Body of pancreas (tissue), 4 donors: ENCODE measurements at regions of chr20 and their contacts with region 1.

Region 1: DNA sequence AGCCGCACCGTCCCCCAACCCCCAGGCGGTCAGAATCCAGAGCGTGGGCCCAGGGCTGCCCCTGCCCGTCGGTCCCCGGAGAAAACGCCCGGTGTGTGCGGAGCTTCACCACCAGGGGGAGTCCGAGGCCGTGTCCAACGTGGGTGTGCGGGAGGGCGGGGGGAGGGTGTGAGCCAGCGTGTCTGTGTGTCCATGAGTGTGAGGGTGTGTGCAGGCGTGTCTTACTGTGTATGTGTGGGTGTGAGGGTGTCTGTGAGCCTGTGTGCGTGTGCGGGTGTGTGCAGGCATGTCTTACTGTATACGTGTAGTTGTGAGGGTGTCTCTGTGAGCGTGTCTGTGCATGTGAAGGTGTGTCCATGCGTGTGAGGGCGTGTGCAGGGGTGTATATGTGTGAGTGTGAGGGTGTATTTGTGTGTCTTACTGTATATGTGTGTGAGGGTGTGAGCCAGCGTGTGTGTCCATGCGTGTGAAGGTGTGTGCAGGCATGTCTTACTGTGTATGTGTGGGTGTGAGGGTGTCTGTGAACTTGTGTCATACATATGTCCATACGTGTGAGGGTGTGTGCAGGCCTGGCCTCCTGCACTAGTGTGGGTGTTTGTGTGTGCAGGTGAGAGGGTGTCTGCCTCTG is 24.6 kb upstream of the GATA5 start:
- DNase-seq: peak; percentile 71 to 80 (median 76)
- ATAC-seq: peak; percentile 80
- H3K4me3 ChIP-seq: no peak overlapping the region
- H3K27ac ChIP-seq: no peak overlapping the region
- H3K4me1 ChIP-seq: peaks cover 20% of the 10 kb centered on the region
- H3K27me3 ChIP-seq: peaks cover 0 to 8% of the 10 kb centered on the region in 2 donors
- CTCF ChIP-seq: peak; percentile 74 to 91 (median 86)
- POLR2A ChIP-seq: no peak

Region 2: DNA sequence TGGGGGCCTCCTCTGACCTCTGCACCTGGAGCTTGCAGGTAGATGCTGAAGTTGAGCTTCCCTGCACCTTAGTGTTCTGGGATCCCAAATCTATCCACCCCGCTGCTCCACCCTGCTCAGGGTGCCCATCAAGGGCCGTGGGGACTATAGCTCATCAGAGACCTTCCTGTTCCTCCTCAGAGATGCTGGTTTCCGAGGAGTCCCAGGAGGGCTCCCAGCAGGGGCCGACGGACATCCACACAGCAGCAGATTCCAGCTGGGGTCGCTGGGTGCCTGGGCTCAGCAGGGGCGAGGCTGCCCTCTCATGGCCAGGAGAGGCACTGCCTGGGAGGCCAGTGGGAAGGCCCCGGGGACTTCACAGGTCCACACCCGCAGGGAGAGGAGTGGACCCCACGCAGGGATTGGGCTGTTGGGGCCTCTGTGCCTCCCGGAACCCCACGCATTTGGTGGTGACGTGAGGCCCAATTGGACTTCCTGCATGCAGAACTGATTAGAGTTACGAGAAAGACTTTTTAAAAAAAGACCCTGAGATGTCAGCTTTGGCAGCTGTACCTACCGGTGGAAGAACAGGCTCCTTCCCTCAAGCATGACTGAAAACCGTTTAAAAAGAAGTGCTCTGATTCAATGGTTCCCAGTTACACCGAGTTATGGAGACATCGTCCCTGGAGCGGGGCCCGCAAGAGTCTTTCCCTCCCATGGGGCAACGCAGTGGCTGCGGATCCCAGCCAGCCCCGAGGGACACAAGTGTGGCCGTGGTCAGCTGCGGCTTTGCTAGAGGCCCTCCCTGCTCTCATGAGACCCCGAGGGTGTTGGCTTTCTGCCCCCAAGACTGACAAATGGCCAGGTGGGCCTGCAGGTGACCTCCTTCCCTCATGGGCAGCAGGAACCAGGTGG is 116.6 kb after region 1 on chr20:
- intact Hi-C with region 1: loop called (anchors 5 kb)
- DNase-seq: peak; percentile 75 to 84 (median 77)
- ATAC-seq: peak; percentile 88
- H3K4me3 ChIP-seq: no peak overlapping the region
- H3K27ac ChIP-seq: peak overlapping the region in 3 of 4 donors; percentile 25 to 60 (median 36)
- H3K4me1 ChIP-seq: peaks cover 4% of the 10 kb centered on the region
- H3K27me3 ChIP-seq: no peaks in the 10 kb centered on the region
- CTCF ChIP-seq: peak; percentile 84 to 97 (median 91)
- POLR2A ChIP-seq: no peak

Region 3: DNA sequence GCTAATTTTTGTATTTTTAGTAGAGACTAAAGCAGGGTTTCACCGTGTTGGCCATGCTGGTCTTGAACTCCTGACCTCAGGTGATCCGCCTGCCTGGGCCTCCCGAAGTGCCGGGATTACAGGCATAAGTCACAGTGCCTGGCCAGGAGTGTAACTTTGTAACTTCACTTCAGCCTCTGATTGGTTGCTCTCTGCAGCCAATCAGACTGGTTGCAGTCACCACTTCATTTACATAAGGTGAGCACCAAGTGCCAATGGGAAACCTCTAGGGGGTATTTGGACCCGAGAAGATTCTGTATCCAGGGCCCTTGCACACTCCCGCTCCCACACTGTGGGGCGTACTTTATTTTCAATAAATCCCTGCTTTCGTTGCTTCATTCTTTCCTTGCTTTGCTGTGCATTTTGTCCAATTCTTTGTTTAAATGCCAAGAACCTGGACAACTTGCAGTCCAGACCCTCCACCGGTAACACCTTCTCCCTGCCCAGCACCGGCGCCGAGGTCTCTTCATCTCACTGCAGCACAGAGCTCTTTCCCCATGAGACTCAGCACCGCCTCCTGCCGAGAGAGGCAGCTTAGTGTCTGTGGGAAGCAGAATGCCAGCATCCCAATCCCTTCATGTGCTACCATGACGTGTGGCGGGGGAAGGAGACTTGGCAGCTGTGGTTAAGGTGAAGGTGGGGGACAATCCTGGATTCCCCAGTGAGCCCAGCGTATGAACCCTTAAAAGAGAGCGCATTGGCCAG is 282.0 kb after region 1 on chr20:
- intact Hi-C with region 1: loop called (anchors 10 kb)
- DNase-seq: no peak
- ATAC-seq: no peak
- H3K4me3 ChIP-seq: no peak overlapping the region
- H3K27ac ChIP-seq: no peak overlapping the region
- H3K4me1 ChIP-seq: no peaks in the 10 kb centered on the region
- H3K27me3 ChIP-seq: no peaks in the 10 kb centered on the region
- CTCF ChIP-seq: no peak
- POLR2A ChIP-seq: no peak